Posterior vena cava (tissue), 2 donors: ENCODE measurements at regions of chr2 and their contacts with region 1.

Region 1: GRCh38 chr2:123532994-123533393 is 492.1 kb upstream of the CNTNAP5 start:
- DNase-seq: no peak

Region 2: GRCh38 chr2:122481717-122482116 is 1051.3 kb before region 1 on chr2:
- intact Hi-C with region 1: loop called in 1 of 2 experiments (anchors 10 kb)
- DNase-seq: no peak

Region 3: DNA sequence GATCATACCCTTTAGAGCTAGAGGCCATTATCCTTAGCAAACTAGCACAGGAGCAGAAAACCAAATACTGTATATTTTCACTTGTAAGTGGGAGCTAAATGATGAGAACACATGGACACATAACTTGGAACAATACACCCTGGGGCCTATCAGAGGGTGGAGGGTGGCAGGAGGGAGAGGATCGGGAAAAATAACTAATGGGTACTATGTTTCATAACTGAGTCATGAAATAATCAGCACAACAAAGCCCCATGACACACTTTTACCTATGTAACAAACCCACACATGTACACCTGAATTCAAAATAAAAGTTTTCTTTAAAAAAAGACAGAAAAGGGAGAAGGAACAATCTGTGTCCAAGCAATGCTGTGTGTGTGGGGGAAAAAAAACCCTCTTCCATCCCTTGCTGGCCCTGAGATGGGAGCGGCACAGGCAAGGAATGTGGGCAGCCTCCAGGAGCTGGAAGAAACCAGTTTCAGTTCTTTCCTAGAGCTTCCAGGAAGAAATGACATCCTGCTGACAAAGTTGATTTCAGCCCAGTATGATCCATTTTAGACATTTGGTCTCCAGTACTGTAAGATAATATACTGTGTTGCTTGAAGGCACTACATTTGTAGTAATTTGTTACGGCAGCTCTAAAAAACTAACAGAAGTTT is 33.4 kb after region 1 on chr2:
- intact Hi-C with region 1: no loop called
- DNase-seq: no peak

Region 4: DNA sequence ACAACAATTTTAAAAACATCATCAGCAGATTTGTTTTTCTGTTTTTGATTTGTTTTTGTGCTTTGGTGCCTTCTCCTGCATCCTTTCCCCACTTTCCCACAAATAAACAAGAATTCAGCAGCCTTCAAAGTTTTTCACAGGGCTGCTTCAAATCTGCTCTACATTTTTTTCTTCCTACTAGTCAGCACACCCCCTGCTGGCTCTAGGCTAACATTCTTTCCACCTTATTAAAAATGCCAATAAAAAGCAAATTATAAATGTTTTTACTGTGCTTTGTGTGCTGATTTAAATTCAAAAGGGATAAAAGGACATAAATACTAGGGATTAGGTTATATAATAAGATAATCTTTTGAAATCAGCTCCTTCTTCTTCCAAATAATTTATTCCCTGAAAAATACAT is 485.9 kb after region 1 on chr2:
- intact Hi-C with region 1: no loop called
- DNase-seq: no peak

Region 5: GRCh38 chr2:124267794-124268193 is 734.8 kb after region 1 on chr2:
- intact Hi-C with region 1: no loop called
- DNase-seq: no peak